Activated CD8-positive, alpha-beta T cell treated with anti-CD3 and anti-CD28 coated beads, Interleukin-2, amount 10 ng/mL, durations not matched to agents 7 days and 5 days (primary cell): ENCODE measurements at regions of chr6 and their contacts with region 1.

Region 1: DNA sequence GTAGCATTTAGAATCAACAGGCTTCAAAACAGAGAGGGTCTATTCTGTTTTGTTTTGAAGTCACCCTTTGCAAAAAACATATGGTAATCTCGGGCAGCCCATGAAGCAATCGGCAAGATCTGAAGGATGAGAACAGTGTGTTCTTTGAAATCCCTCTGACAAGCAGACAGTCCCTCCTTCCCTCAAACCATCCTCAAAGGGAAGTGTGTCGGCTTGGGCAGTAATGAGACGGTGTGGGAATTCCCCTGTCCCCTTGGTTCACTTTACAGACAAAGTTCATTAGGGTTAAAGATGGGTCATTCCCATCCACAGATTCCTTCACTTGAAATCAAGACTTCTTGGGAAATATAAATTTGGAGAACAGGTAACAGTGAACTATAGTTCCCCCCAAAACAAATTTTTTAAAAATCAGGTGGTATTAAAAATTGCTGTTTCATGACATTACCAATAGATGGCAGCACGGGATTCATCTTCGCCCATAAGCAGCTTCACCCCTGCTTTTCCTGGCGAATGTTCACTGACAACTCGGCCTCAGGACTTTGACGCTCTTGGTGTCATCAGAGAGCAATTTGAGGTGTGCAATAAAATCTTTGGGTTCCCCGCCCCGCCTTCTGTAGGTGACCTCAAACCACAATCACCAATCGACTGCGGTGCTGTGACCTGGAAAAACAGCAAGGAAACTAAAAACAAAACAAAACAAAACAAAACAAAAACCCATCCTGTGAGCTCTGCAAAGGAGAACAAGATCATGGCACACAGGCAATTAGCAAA is 159.3 kb upstream of the TNFAIP3 start:
- DNase-seq: peak; percentile 88
- ATAC-seq: peak; percentile 82
- H3K4me3 Mint-ChIP-seq: peak overlapping the region; percentile 62
- H3K27ac Mint-ChIP-seq: peak overlapping the region; percentile 89
- H3K4me1 Mint-ChIP-seq: peaks cover 62% of the 10 kb centered on the region
- H3K27me3 Mint-ChIP-seq: no peaks in the 10 kb centered on the region

Region 2: GRCh38 chr6:137697267-137697938 is 10.4 kb before region 1 on chr6:
- CTCF ChIA-PET with region 1: interaction called, 28 read pairs
- POLR2A ChIA-PET with region 1: interaction called, 3 read pairs
- DNase-seq: no peak
- ATAC-seq: peak; percentile 17
- H3K4me3 Mint-ChIP-seq: no peak overlapping the region
- H3K27ac Mint-ChIP-seq: no peak overlapping the region
- H3K4me1 Mint-ChIP-seq: peaks cover 38% of the 10 kb centered on the region
- H3K27me3 Mint-ChIP-seq: peaks cover 5% of the 10 kb centered on the region

Region 3: GRCh38 chr6:137799950-137800568 is 92.3 kb after region 1 on chr6:
- CTCF ChIA-PET with region 1: interaction called, 78 read pairs
- POLR2A ChIA-PET with region 1: interaction called, 12 read pairs
- DNase-seq: peak; percentile 75
- ATAC-seq: peak; percentile 74
- H3K4me3 Mint-ChIP-seq: no peak overlapping the region
- H3K27ac Mint-ChIP-seq: peak overlapping the region; percentile 60
- H3K4me1 Mint-ChIP-seq: peaks cover 64% of the 10 kb centered on the region
- H3K27me3 Mint-ChIP-seq: no peaks in the 10 kb centered on the region

Region 4: DNA sequence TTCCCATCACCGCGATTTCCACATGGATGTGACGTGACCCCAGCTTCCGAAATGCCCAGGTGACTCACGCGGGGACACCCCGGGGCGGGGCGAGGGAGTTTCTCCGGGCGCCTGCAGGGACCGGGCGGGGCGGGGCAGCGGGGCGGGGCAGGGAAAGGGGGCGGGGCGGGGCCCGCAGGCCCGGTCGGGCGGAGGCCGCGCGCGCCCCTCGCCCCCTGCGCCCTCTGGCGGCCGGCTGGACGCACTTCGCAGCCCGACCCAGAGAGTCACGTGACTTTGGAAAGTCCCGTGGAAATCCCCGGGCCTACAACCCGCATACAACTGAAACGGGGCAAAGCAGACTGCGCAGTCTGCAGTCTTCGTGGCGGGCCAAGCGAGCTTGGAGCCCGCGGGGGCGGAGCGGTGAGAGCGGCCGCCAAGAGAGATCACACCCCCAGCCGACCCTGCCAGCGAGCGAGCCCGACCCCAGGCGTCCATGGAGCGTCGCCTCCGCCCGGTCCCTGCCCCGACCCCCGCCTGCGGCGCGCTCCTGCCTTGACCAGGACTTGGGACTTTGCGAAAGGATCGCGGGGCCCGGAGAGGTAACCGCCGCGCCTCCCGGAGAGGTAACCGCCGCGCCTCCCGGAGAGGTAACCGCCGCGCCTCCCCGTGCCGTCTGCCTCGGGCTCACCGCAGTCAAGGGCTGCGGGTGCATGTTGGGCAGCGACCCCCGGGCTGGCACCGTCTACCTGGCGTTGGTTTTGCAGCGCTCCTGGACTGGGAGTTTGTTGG is 159.3 kb after region 1 on chr6 and contains the start of gene TNFAIP3:
- CTCF ChIA-PET with region 1: interaction called, 186 read pairs
- POLR2A ChIA-PET with region 1: interaction called, 35 read pairs
- DNase-seq: peak; percentile 94
- ATAC-seq: peak; percentile 82
- H3K4me3 Mint-ChIP-seq: peak within 1 kb of the TSS; percentile 94
- H3K27ac Mint-ChIP-seq: peak within 1 kb of the TSS; percentile 92
- H3K4me1 Mint-ChIP-seq: peaks cover 59% of the 10 kb centered on the region
- H3K27me3 Mint-ChIP-seq: no peaks in the 10 kb centered on the region
- total RNA-seq, gene TNFAIP3: 29.6 to 34.5 TPM

Region 5: DNA sequence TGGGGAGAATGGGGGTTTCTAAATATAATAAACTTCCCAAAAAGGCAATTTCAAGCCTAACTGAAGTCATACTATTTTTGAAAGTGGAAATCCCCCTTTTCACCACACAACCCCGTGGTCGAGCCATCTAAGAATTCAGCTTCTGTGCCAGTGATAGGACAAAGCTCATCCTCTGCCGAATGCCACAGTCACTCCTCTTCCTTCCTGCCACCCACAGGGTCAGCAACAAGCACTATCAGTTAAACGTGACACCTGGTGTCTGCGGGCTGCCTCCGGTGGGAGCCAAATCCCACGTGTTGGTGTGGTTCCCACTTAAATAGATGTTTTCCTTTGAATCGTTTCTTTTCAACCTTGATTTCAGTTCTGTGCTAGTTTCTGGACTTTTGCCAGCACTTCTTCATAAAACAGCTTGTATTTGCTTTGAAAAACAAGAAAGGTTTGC is 220.0 kb after region 1 on chr6:
- CTCF ChIA-PET with region 1: interaction called, 12 read pairs
- POLR2A ChIA-PET with region 1: interaction called, 7 read pairs
- DNase-seq: peak; percentile 87
- ATAC-seq: peak; percentile 99
- H3K4me3 Mint-ChIP-seq: peak overlapping the region; percentile 52
- H3K27ac Mint-ChIP-seq: peak overlapping the region; percentile 69
- H3K4me1 Mint-ChIP-seq: peaks cover 45% of the 10 kb centered on the region
- H3K27me3 Mint-ChIP-seq: no peaks in the 10 kb centered on the region

Region 6: GRCh38 chr6:137951064-137951597 is 243.4 kb after region 1 on chr6:
- CTCF ChIA-PET with region 1: interaction called, 58 read pairs
- POLR2A ChIA-PET with region 1: interaction called, 3 read pairs
- DNase-seq: no peak
- ATAC-seq: no peak
- H3K4me3 Mint-ChIP-seq: no peak overlapping the region
- H3K27ac Mint-ChIP-seq: peak overlapping the region; percentile 31
- H3K4me1 Mint-ChIP-seq: peaks cover 16% of the 10 kb centered on the region
- H3K27me3 Mint-ChIP-seq: peaks cover 4% of the 10 kb centered on the region

Region 7: DNA sequence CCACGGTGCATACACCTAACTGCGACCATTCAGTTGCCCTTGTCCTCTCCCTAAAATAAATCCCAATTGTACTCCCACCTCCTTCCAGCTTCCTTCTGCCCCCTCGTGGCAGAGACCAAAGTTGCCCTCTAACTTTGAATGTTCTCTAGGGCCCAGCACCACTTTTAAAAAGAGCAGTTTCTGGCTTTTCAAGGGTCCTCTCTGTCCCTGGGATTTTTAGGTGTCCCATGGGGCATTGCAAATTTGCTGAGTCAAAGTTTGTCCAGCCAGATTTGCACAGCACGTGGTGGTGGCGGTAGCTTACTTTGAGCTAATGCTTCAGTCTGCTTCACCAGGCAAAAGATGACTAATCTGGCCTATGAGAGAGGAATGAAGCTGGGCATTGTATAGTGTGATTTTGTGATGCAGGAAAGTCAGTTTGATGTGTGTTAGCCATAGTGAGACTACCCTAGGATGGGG is 299.3 kb after region 1 on chr6:
- CTCF ChIA-PET with region 1: interaction called, 15 read pairs
- POLR2A ChIA-PET with region 1: no interaction called
- DNase-seq: peak; percentile 44
- ATAC-seq: no peak
- H3K4me3 Mint-ChIP-seq: no peak overlapping the region
- H3K27ac Mint-ChIP-seq: no peak overlapping the region
- H3K4me1 Mint-ChIP-seq: peaks cover 12% of the 10 kb centered on the region
- H3K27me3 Mint-ChIP-seq: no peaks in the 10 kb centered on the region